AG04450 (cell line): ENCODE measurements at regions of chr6 and their contacts with region 1.

Region 1: DNA sequence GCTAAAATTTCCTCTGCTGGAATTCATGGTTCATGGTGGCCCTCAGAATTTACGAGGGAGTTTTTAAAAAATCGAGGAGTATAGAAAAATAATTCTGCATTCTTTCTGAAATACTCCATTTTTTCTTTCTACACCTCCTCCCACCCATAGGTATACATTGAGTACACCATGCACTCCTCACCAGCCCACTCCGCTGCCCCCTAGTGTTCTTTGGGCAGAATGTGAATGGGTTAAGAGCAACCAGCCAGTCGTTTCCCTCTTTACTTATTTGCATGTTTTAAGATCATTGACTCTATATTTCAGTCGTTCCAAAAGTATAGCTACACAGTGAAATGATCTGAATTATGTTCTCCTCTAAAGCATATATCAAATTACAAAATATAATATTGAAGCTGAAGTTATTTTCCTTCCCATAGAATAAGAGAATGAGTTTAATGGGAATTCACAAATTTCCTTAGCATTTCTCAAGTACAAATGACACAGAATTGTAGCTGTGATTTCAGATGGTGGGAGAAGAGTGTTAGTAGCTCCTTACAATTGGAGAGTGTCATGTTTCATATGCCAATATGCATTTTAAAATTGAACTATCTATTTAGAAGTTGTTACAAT is 977.7 kb upstream of the SLC35B3 start:
- DNase-seq: no peak
- H3K4me3 ChIP-seq: no peak overlapping the region
- H3K27ac ChIP-seq: no peak overlapping the region
- H3K27me3 ChIP-seq: no peaks in the 10 kb centered on the region
- CTCF ChIP-seq: peak; percentile 62

Region 2: DNA sequence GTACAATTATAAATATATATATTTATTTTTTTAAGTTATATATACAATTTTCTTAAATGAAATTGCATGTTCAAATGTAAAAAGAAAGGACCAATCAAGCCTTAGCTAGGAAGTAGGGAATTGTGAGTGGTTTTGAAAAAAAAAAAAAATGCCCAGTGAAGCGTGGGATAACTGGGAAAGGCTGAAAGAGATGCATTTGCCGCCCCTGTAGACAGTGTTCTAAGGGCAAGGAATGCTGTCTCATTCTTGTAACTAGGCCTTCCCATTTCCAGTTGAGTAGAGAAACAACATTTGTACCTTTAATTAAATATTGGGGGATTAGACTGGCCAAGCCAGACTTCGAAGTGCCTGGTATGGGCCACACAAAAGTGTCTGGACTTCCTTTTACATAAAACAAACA is 547.6 kb before region 1 on chr6:
- CTCF ChIA-PET with region 1: interaction called, 12 read pairs
- POLR2A ChIA-PET with region 1: no interaction called
- DNase-seq: no peak
- H3K4me3 ChIP-seq: no peak overlapping the region
- H3K27ac ChIP-seq: no peak overlapping the region
- H3K27me3 ChIP-seq: no peaks in the 10 kb centered on the region
- CTCF ChIP-seq: no peak